HCT116 (cell line): ENCODE measurements at regions of chr9 and their contacts with region 1.

Region 1: GRCh38 chr9:76704593-76705204 is 59.5 kb upstream of the PCA3 start:
- DNase-seq: peak; percentile 80
- ATAC-seq: peak; percentile 86
- H3K4me3 ChIP-seq: no peak overlapping the region
- H3K27ac ChIP-seq: no peak overlapping the region
- H3K4me1 ChIP-seq: no peaks in the 10 kb centered on the region
- H3K27me3 ChIP-seq: peaks cover 60% of the 10 kb centered on the region
- CTCF ChIP-seq: peak; percentile 46 to 84 (median 68)
- POLR2A ChIP-seq: no peak
- RAD21 ChIP-seq: peak; percentile 90

Region 2: GRCh38 chr9:76403352-76403751 is 301.3 kb before region 1 on chr9:
- CTCF ChIA-PET with region 1: no interaction called
- POLR2A ChIA-PET with region 1: no interaction called
- RAD21 ChIA-PET with region 1: no interaction called
- intact Hi-C with region 1: loop called (anchors 2 kb)
- DNase-seq: peak; percentile 42
- ATAC-seq: peak; percentile 77
- H3K4me3 ChIP-seq: peak overlapping the region; percentile 2 to 15; a peak in 1 of 4 replicates
- H3K27ac ChIP-seq: peak overlapping the region; percentile 9; the same call in 1 of the 2 replicates
- H3K4me1 ChIP-seq: peaks cover 8 to 22% of the 10 kb centered on the region in 2 experiments; a peak in 3 of 4 replicates
- H3K27me3 ChIP-seq: no peaks in the 10 kb centered on the region
- CTCF ChIP-seq: peak; percentile 49 to 67 (median 65); a peak in 5 of 6 replicates
- POLR2A ChIP-seq: no peak
- RAD21 ChIP-seq: peak; percentile 48; the same call in 1 of the 2 replicates

Region 3: GRCh38 chr9:76451234-76451633 is 253.5 kb before region 1 on chr9:
- CTCF ChIA-PET with region 1: interaction called, 4 read pairs
- POLR2A ChIA-PET with region 1: no interaction called
- RAD21 ChIA-PET with region 1: no interaction called
- intact Hi-C with region 1: loop called (anchors 1 kb)
- DNase-seq: no peak
- ATAC-seq: no peak
- H3K4me3 ChIP-seq: no peak overlapping the region
- H3K27ac ChIP-seq: no peak overlapping the region
- H3K4me1 ChIP-seq: peaks cover 1 to 10% of the 10 kb centered on the region in 2 experiments; a peak in 3 of 4 replicates
- H3K27me3 ChIP-seq: no peaks in the 10 kb centered on the region
- CTCF ChIP-seq: no peak
- POLR2A ChIP-seq: no peak
- RAD21 ChIP-seq: no peak

Region 4: GRCh38 chr9:76658535-76659231 is 46.0 kb before region 1 on chr9:
- CTCF ChIA-PET with region 1: interaction called, 8 read pairs
- POLR2A ChIA-PET with region 1: no interaction called
- RAD21 ChIA-PET with region 1: no interaction called
- intact Hi-C with region 1: loop called (anchors 1 kb)
- DNase-seq: peak; percentile 26
- ATAC-seq: peak; percentile 96
- H3K4me3 ChIP-seq: no peak overlapping the region
- H3K27ac ChIP-seq: no peak overlapping the region
- H3K4me1 ChIP-seq: no peaks in the 10 kb centered on the region
- H3K27me3 ChIP-seq: peaks cover 18% of the 10 kb centered on the region; the same call in 1 of the 2 replicates
- CTCF ChIP-seq: peak; percentile 56 to 74 (median 69)
- POLR2A ChIP-seq: no peak
- RAD21 ChIP-seq: peak; percentile 81

Region 5: DNA sequence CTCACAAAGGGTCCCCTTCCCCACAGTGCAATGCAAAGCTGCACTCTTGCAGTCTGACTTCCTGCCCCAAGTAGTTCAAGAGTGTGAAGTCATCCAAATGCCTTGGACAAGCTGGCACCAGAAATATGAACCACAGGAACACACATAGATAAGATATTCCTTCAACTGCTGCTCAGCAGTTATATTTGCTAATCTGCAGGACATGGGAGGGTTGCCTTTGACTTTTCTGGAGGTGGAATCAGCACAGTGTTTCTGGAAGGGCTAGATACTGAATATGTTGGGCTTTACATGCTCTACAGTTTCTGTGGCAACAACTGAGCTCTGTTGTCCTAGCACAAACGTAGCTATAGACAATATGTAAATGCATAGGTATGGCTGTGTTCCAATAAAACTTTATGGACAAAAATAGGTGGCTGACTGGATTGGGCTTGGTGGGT is 37.2 kb before region 1 on chr9:
- CTCF ChIA-PET with region 1: interaction called, 19 read pairs
- POLR2A ChIA-PET with region 1: no interaction called
- RAD21 ChIA-PET with region 1: interaction called in 1 of 2 experiments, 3 read pairs
- intact Hi-C with region 1: loop called (anchors 1 kb)
- DNase-seq: no peak
- ATAC-seq: no peak
- H3K4me3 ChIP-seq: no peak overlapping the region
- H3K27ac ChIP-seq: no peak overlapping the region
- H3K4me1 ChIP-seq: no peaks in the 10 kb centered on the region
- H3K27me3 ChIP-seq: peaks cover 9% of the 10 kb centered on the region; the same call in 1 of the 2 replicates
- CTCF ChIP-seq: no peak
- POLR2A ChIP-seq: no peak
- RAD21 ChIP-seq: no peak

Region 6: GRCh38 chr9:76732341-76732958 is 27.8 kb after region 1 on chr9:
- CTCF ChIA-PET with region 1: no interaction called
- POLR2A ChIA-PET with region 1: no interaction called
- RAD21 ChIA-PET with region 1: no interaction called
- intact Hi-C with region 1: no loop called
- DNase-seq: no peak
- ATAC-seq: no peak
- H3K4me3 ChIP-seq: no peak overlapping the region
- H3K27ac ChIP-seq: no peak overlapping the region
- H3K4me1 ChIP-seq: no peaks in the 10 kb centered on the region
- H3K27me3 ChIP-seq: peaks cover 5% of the 10 kb centered on the region; the same call in 1 of the 2 replicates
- CTCF ChIP-seq: no peak
- POLR2A ChIP-seq: no peak
- RAD21 ChIP-seq: no peak